WTC11 (cell line): ENCODE measurements at regions of chr9 and their contacts with region 1.

Region 1: DNA sequence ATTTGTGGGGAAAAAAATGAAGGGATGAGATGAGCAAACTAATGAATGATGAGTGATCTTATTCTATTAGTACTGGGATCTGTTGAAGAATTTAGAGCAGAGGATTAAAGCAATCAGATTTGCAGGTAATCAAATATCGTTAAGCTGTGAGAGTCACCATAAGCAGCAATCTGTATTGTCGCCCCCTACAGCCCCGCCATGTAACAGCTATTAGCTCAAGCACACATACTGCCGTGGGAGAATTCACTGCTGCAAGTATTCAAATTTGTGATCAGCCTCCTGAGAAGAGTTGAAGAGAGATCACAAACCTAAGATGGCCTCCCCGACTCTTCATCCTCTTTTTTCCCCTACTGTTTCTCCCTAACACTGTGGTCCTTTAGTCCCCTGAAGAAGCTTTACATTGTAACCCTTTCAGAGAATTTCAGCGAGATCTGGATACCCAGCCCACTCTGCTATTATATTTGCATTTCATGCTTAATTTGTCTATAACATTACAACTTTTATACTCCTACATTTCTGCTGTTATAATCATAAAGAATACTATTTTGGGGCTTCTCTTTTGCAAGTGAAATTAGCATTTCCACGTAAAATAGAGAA is 28.5 kb upstream of the PHF24 start:
- DNase-seq: peak; percentile 68
- ATAC-seq: peak; percentile 97
- H3K4me3 Mint-ChIP-seq: no peak overlapping the region
- H3K27ac Mint-ChIP-seq: no peak overlapping the region
- H3K4me1 Mint-ChIP-seq: no peaks in the 10 kb centered on the region; the same call in 1 of the 2 replicates
- H3K27me3 Mint-ChIP-seq: peaks cover 5% of the 10 kb centered on the region
- CTCF ChIP-seq: peak; percentile 63

Region 2: GRCh38 chr9:34948451-34948850 is 18.8 kb after region 1 on chr9:
- CTCF ChIA-PET with region 1: interaction called, 16 read pairs
- POLR2A ChIA-PET with region 1: no interaction called
- DNase-seq: no peak
- ATAC-seq: no peak
- H3K4me3 Mint-ChIP-seq: no peak overlapping the region
- H3K27ac Mint-ChIP-seq: no peak overlapping the region
- H3K4me1 Mint-ChIP-seq: no peaks in the 10 kb centered on the region
- H3K27me3 Mint-ChIP-seq: peaks cover 5% of the 10 kb centered on the region
- CTCF ChIP-seq: no peak

Region 3: GRCh38 chr9:34961574-34962490 is 32.2 kb after region 1 on chr9:
- CTCF ChIA-PET with region 1: interaction called, 22 read pairs
- POLR2A ChIA-PET with region 1: no interaction called
- DNase-seq: no peak
- ATAC-seq: no peak
- H3K4me3 Mint-ChIP-seq: no peak overlapping the region
- H3K27ac Mint-ChIP-seq: no peak overlapping the region
- H3K4me1 Mint-ChIP-seq: peaks cover 19% of the 10 kb centered on the region
- H3K27me3 Mint-ChIP-seq: peaks cover 42% of the 10 kb centered on the region
- CTCF ChIP-seq: no peak